ENCODE measurements at regions of chr14 and their contacts with region 1.

Region 1: GRCh38 chr14:49692811-49693734 is at the start of gene KLHDC1:
- DNase-seq: peak; percentile 93
- ATAC-seq: peak; percentile 95
- total RNA-seq, gene KLHDC1: 6.5 to 11.8 TPM

Region 2: DNA sequence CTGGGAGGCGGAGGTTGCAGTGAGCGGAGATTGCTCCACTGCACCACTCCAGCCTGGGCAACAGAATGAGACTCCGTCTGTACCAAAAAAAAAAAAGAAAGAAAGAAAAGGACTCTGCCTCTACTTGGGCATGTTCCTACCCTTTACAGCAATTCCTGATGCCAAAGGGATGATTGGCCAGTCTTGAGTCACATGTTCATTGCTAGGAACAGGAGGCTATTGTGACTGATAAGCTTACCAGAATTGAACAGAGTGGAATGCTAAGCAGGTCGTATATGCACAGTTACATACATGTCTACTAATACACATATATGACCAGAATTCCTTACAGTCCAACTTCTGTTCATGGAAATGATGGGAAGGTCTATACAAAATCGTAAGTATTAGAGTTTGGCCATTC is 34.1 kb after region 1 on chr14:
- intact Hi-C with region 1: no loop called
- DNase-seq: no peak
- ATAC-seq: no peak

Region 3: GRCh38 chr14:49767562-49768300 is 74.7 kb after region 1 on chr14 and contains the start of gene KLHDC2:
- intact Hi-C with region 1: loop called in 1 of 2 experiments (anchors 10 kb)
- DNase-seq: peak; percentile 92
- ATAC-seq: peak; percentile 95 to 97
- total RNA-seq, gene KLHDC2: 54.8 to 67.1 TPM